ENCODE measurements at regions of chr19 and their contacts with region 1.

Region 1: GRCh38 chr19:37313335-37313627 is 57.6 kb upstream of the ZNF527 start:
- DNase-seq: no peak
- ATAC-seq: no peak
- H3K4me3 ChIP-seq: no peak overlapping the region
- H3K27ac ChIP-seq: no peak overlapping the region
- H3K4me1 ChIP-seq: no peaks in the 10 kb centered on the region
- CTCF ChIP-seq: no peak
- EP300 ChIP-seq: no peak
- POLR2A ChIP-seq: no peak
- RAD21 ChIP-seq: no peak

Region 2: DNA sequence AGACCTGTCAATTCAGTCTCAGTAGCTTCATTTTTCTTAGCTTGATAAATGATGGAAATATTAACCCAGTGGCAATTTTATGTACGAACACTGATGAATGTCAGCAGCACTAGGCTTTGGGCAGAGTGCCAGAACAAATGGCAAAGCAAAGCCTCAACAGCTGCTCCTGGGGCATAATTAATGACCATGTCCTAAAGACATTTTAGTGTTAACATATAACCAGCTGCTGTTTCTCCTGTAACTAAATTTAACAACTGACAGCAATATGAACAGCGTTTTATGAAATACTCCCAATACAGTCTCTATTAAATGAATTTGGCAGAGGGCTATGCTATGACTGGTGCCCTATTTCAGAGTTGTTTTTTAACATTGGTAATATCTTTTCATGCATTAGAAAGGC is 350.0 kb before region 1 on chr19:
- CTCF ChIA-PET with region 1: no interaction called
- POLR2A ChIA-PET with region 1: no interaction called
- DNase-seq: no peak
- ATAC-seq: no peak
- H3K4me3 ChIP-seq: no peak overlapping the region
- H3K27ac ChIP-seq: no peak overlapping the region
- H3K4me1 ChIP-seq: no peaks in the 10 kb centered on the region
- CTCF ChIP-seq: no peak
- EP300 ChIP-seq: no peak
- POLR2A ChIP-seq: no peak
- RAD21 ChIP-seq: no peak

Region 3: DNA sequence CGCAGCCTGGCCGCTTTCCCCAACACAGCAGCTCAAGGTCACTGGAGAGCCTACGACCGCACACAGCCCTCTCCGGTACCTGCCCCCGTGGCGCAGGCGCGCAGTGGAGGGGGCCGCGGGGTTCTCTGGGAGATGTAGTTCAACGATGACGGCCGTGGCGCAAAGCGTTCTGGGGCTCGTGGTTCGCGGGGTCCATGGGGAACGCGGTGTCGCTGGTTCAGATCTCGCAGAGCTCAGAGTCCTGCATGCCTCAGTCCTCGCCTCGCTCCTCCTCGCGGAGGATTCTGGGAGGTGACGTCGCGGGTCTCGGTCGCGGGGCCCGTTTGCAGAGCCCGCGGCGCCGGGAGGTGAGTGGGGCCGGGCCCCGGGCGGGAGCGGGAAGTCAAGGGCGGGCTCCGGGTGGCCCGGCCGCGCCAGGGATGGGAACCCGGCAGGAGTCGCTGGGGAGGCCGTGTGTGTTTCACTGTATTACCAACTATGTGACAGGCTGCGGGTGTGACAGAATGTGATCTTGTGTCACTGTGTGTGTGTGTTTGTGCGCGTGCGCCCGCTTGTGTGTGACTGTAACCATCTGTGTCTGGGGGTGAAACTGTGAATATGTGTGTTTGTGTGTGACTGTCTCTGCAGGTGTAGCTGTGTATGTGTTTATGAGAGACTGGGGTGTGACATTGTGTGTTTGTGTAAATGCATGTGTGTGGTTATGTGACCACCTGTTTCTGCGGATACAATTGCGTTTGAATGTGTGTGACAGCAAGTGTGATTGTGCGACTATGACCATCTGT is 57.8 kb after region 1 on chr19 and contains the start of gene ZNF527:
- CTCF ChIA-PET with region 1: interaction called, 3 read pairs
- POLR2A ChIA-PET with region 1: interaction called, 12 read pairs
- DNase-seq: peak; percentile 99
- ATAC-seq: peak; percentile 99 to 100
- H3K4me3 ChIP-seq: peak within 1 kb of the TSS; percentile 58
- H3K27ac ChIP-seq: peak within 1 kb of the TSS; percentile 64 to 85
- H3K4me1 ChIP-seq: no peaks in the 10 kb centered on the region
- CTCF ChIP-seq: no peak
- EP300 ChIP-seq: no peak
- POLR2A ChIP-seq: peak; percentile 82
- RAD21 ChIP-seq: no peak; a peak in 1 of 5 replicates
- polyA plus RNA-seq, gene ZNF527: 5.3 and 8.2 TPM in 2 replicates

Region 4: GRCh38 chr19:37513397-37513796 is 200.1 kb after region 1 on chr19:
- CTCF ChIA-PET with region 1: no interaction called
- POLR2A ChIA-PET with region 1: no interaction called
- DNase-seq: no peak
- ATAC-seq: no peak
- H3K4me3 ChIP-seq: no peak overlapping the region
- H3K27ac ChIP-seq: no peak overlapping the region
- H3K4me1 ChIP-seq: no peaks in the 10 kb centered on the region
- CTCF ChIP-seq: no peak
- EP300 ChIP-seq: no peak
- POLR2A ChIP-seq: no peak
- RAD21 ChIP-seq: no peak